HEK293 (cell line): ENCODE measurements at regions of chr11 and their contacts with region 1.

Region 1: DNA sequence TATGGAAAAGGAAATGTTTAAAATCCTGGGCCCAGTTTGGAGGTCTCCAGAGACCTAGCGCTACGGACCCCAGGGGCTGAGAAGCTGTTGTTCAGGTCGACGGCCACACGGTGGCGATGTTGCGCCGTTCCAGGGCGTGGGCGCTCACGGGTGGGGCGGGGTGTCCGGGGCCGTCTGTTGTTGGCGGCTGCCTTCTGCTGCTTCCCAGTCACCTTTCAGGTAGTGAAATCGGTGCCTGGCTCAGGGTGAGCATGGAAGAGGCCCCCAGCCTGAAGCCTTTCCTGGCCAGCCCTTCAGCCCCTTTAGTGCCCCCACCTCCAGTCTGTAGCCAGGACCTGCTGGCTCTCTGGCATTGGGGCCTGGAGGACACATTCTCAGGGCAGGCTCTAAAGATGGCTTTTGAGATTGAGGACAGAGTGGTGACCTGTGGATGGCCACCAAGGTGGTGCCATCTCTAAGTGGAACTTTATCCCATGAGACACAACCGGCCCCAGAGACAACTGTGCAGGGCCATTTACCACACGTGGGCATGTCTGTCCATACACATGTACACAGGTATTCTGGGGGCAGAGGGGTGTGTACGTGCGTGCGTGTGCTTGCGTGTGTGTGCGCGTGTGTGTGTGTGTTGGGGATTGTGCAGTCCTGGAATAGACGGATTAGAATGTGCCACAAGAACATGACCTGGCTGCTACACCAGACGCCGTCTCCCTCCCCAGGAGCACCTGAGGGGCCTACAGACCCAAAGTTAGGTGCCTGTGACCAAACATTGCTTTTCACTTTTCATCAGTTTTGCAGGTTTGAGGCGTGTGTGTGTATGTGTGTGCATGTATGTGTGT is 53.8 kb downstream of the ST14 start:
- H3K4me3 ChIP-seq: no peak overlapping the region
- H3K27ac ChIP-seq: no peak overlapping the region
- H3K4me1 ChIP-seq: no peaks in the 10 kb centered on the region
- CTCF ChIP-seq: peak; percentile 67

Region 2: DNA sequence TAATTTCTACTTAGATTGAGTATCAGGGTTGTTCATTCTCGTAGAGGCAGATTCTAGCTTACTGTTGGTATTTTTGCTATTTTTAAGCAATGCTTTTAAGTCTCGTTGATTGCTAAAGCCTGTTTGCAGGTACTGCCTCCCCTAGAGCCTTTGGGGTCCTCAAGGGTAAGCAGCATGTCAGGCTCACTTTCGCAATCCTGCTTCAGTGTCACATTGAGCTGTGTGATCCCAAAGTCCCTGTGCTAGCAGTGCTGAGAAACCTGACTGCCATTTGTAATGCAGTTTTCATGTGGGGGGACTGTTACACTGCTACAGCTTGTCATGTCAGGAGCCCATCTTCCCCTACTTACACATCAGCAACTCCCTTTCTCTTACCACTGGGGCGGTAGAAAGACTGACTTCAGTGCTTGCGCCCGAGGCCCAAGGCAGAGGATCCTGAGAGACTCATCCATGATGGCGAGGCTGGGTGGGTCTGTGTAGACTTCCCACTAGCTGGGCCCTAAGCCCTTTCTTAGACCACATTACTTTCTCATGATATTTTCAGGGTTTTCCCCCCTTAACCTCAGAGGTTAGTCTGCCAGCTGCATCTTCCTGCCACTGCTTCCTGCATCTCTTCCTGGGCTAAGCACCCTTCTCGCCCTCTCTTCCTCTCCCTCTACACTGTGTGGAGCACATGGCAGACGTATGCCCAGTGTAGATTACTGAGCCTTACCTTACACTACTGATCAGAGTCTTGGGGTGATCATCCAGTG is 94.5 kb before region 1 on chr11:
- CTCF ChIA-PET with region 1: no interaction called
- POLR2A ChIA-PET with region 1: no interaction called
- H3K4me3 ChIP-seq: no peak overlapping the region
- H3K27ac ChIP-seq: no peak overlapping the region
- H3K4me1 ChIP-seq: peaks cover 3% of the 10 kb centered on the region; the same call in 1 of the 2 replicates
- CTCF ChIP-seq: no peak

Region 3: DNA sequence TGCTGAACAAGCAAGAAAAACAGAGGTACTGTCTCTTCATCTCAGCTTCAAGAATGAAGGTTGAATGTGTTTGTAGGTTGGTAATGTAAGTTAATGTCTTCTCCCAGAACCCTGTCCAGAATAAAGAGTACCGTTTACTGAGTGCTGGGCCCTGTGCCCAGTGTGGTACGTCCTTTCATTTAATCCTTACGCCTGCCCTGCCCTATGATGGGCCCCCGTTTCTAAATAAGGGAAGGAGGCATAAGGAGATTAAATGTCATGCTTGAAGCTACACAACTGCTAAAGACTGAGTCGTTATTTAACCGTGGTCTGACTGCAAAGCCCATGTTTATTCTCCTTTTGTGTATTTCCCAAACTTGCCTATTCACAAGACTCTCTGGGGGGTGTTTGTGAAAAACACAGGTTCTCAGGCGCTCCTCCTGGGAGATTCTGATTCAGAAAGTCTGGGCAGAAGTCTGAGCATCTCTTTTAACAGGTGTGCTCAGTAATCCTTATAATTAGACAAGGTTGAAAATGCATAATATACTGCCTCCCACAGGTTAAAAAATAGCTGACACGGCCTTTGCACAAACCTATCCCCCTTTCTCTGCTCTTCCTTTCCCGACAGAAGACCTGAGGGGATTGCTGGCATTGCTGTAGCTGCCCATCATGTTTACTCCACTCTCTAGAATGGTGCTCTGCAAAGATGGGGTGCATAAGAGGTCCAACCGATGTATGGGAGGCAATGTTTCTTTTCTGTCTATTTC is 157.7 kb after region 1 on chr11:
- CTCF ChIA-PET with region 1: interaction called, 10 read pairs
- POLR2A ChIA-PET with region 1: no interaction called
- H3K4me3 ChIP-seq: no peak overlapping the region
- H3K27ac ChIP-seq: no peak overlapping the region
- H3K4me1 ChIP-seq: no peaks in the 10 kb centered on the region
- CTCF ChIP-seq: no peak

Region 4: GRCh38 chr11:130442737-130443136 is 229.4 kb after region 1 on chr11:
- CTCF ChIA-PET with region 1: interaction called, 10 read pairs
- POLR2A ChIA-PET with region 1: no interaction called
- H3K4me3 ChIP-seq: no peak overlapping the region
- H3K27ac ChIP-seq: no peak overlapping the region
- H3K4me1 ChIP-seq: no peaks in the 10 kb centered on the region
- CTCF ChIP-seq: no peak